Lower lobe of right lung (tissue), 2 donors: ENCODE measurements at regions of chr2 and their contacts with region 1.

Region 1: DNA sequence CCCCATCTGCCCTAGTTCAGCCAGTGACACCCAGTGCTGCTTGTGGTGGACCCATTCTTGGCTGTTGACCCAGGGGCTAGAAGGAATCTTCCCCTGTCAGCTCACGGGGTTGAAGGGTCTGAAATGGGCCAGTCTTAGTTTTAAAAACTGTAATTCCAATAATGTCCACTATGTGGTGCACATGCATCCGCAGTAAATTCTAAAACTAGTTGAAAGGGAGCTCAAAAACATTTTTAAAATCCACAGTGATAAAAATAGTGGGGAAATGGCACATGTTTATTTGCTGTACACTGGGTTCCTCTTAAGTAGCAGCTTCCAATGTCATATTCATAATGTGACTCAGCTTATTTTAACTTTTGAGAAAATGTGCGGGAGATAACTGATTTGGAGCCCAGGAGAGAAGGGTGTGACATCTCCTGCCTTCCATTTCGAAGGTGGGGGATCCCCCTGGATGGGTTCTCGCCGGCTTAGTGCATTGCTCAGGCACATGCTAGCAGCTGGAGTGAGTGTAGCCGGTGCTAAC is 32.8 kb downstream of the GRHL1 start:
- DNase-seq: no peak
- ATAC-seq: peak; percentile 78 to 84
- H3K4me3 ChIP-seq: no peak overlapping the region
- H3K27ac ChIP-seq: no peak overlapping the region
- H3K4me1 ChIP-seq: peaks cover 23% of the 10 kb centered on the region
- H3K27me3 ChIP-seq: no peaks in the 10 kb centered on the region
- CTCF ChIP-seq: peak; percentile 76

Region 2: DNA sequence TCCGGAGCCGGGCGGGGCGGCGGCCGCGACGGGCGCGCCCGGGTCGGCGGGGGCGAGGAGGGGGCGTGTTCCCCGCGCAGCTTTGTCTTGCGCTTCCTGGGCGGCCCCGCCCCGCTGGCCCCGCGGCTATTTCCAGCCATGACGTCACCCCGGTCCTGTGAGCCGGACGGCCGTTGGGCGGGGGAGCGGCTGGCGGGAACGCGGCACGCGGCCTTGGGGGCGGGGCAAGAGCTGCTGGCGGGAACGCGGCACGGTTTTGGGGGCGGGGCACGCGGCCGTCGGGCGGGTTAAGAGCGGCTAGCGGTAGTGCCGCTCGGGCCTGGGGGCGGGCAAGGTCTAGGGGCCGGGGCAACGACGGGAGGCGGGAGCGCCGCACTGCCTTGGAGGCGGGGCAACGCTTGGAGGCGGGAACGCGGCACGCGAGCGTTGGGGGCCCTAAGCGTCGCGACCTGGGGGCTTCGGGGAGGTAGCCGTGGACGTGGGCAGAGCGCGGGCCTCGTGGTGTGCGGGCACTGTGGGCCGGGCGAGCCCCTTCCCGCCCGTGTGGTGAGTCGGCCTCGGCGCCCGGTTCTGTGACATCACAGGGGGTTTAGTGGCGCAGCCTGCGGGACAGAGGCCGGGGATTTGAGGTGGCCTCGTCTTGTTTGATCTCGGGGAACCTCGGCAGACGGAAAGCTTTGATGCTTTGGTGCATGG is 59.8 kb after region 1 on chr2:
- intact Hi-C with region 1: loop called (anchors 10 kb)
- DNase-seq: peak; percentile 99
- ATAC-seq: peak; percentile 85 to 89
- H3K4me3 ChIP-seq: peak overlapping the region; percentile 63
- H3K27ac ChIP-seq: peak overlapping the region; percentile 94
- H3K4me1 ChIP-seq: peaks cover 75% of the 10 kb centered on the region
- H3K27me3 ChIP-seq: no peaks in the 10 kb centered on the region
- CTCF ChIP-seq: no peak

Region 3: DNA sequence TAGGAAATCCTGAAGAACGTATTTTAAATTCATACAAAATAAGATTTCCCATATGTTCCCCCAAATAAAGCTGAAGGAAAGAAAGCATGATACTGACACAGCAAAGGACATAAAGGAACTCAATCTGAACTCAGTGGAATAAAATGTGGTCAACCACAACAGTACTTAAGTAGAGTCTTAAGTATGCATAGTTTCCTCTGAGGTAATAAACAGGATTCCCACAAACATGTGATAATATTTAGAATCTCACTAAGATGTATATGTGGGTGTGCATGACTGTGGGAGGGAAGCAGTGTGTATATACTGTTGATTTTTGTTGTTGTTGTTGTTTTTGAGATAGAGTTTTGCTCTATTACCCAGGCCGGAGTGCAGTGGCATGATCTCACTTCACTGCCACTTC is 636.2 kb after region 1 on chr2:
- intact Hi-C with region 1: no loop called
- DNase-seq: no peak
- ATAC-seq: no peak
- H3K4me3 ChIP-seq: no peak overlapping the region
- H3K27ac ChIP-seq: no peak overlapping the region
- H3K4me1 ChIP-seq: peaks cover 5% of the 10 kb centered on the region
- H3K27me3 ChIP-seq: no peaks in the 10 kb centered on the region
- CTCF ChIP-seq: no peak